ENCODE measurements at regions of chr3 and their contacts with region 1.

Region 1: DNA sequence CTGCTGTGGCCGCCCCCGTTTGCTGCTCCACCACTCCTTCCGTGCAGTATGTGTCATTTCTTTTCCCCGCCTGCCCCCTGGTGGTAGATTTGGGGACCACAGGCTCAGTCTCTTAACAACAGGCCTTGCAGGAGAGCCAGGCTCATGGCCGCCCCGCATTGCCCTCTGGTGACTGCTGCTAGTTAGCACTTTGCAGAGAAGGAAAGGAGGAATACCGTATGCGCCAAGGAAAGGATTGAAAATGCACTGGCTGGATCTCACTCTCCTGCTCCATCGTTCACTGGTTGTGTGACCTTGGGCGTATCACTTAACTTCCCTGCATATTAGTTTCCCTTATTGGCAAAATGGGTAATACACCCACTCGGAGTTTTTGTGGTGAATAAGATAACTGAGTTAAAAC is 39.3 kb upstream of the PXYLP1 start:
- DNase-seq: peak; percentile 90 to 100 (median 98)

Region 2: GRCh38 chr3:140931016-140931454 is 261.3 kb before region 1 on chr3:
- intact Hi-C with region 1: no loop called
- DNase-seq: peak in 22 of 42 donors; percentile 4 to 58 (median 24)

Region 3: DNA sequence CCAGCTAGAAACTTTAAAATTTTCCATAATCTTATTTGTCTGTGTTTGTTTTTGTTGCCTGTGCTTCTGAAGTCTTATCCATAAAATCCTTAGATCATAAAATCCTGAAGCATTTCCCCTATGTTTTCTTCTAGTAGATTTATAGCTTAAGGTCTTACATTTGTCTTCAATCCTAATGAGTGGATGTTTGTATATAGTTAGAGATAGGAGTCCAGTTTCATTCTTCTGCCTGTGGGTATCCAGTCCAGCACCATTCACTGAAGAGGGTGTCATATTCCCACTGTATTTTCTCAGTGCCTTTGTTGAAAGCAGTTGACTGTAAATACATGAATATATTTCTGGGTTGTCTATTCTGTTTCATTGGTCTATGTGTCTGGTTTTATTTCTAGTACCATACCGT is 186.0 kb before region 1 on chr3:
- intact Hi-C with region 1: loop called (anchors 5 kb)
- DNase-seq: no peak

Region 4: DNA sequence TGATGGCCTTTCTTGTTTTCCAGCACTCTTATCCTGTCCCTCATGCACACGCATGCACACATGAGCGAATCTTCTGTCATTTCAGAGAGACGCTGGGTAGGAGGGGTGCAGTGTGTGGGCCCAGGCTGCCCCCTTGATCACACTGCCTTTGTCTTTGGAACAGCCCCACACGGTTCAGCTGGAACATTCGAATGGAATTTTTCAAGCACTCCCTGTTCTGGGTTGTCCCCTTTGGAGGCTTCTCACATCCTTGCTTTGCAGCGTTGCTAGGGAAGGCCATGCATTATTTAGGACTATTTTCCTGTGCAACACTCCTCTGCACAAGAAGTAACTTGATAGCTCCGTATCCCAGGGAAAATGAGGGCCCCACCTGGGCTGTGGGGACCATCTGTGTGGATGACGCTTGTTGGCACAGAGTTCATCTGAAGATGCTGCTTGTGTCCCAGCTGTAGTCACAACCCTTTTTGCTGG is 62.8 kb before region 1 on chr3:
- intact Hi-C with region 1: no loop called
- DNase-seq: no peak

Region 5: GRCh38 chr3:141279077-141279967 is 87.0 kb after region 1 on chr3:
- intact Hi-C with region 1: no loop called
- DNase-seq: peak in 6 of 42 donors; percentile 6 to 56 (median 38)

Region 6: DNA sequence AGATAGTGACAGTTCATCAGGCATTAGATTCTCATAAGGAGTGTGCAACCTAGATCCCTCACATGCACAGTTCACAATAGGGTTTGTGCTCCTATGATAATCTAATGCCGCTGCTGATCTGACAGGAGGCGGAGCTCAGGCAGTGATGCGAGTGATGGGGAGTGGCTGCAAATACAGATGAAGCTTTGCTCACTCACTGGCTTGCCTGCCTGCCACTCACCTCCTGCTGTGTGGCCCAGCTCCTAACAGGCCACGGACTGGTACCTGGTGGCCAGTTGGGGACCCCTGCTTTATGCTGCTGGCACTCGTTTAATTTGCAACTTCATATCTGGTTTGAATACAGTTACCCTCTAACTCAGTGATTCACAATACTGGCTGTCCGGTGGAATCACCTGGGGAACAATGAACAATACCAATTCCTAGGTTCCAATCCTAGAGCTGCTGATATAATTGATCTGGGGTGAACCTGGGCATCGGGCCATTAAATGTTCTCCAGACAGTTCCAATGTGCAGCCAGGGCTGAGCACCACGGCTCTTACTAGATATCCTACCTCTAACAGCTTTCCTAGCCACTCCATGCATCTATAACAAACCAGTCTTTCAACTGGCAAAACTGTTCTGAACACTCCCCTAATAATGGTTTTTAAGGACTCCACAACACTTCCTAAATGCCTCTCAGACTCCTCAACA is 815.5 kb after region 1 on chr3:
- intact Hi-C with region 1: no loop called
- DNase-seq: no peak